Esophagus muscularis mucosa (tissue), 4 donors: ENCODE measurements at regions of chr15 and their contacts with region 1.

Region 1: GRCh38 chr15:73700041-73700842 is 16.1 kb downstream of the CD276 start:
- DNase-seq: no peak
- H3K4me3 ChIP-seq: no peak overlapping the region
- H3K27ac ChIP-seq: no peak overlapping the region
- H3K4me1 ChIP-seq: peaks cover 28 to 41% (median 30%) of the 10 kb centered on the region in 4 donors
- H3K27me3 ChIP-seq: no peaks in the 10 kb centered on the region
- CTCF ChIP-seq: peak; percentile 93 to 95 (median 94)
- EP300 ChIP-seq: no peak
- POLR2A ChIP-seq: no peak

Region 2: DNA sequence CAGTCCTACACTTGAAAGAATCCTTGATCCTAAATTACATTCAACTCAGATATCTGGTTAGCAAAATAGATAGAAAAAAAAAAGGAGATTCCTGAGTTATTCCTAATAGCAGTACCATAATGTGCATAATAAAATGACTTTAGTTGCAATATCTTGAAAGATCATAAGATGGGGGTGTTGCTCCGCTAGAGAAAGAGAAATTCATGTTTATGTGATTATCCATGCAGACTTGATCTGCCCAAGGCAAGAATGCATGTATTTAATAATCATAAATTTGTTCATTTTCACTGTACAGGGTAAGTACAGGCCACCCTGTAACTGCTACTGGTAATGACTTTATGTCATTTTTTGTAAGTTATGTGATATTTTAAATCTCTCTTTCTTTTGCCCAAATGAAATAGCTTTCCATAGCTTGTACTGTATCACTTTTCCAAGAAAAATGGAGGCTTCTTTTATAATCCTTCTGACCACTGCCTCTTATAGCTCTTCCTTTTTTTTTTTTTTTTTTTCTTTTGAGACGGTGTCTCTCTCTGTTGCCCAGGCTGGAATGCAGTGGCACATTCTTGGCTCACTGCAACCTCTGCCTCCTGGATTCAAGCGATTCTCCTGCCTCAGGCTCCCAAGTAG is 416.0 kb before region 1 on chr15:
- intact Hi-C with region 1: loop called (anchors 10 kb)
- DNase-seq: no peak
- H3K4me3 ChIP-seq: no peak overlapping the region
- H3K27ac ChIP-seq: peak overlapping the region in 1 of 4 donors; percentile 58
- H3K4me1 ChIP-seq: peaks cover 0 to 48% (median 34%) of the 10 kb centered on the region in 4 donors
- H3K27me3 ChIP-seq: no peaks in the 10 kb centered on the region
- CTCF ChIP-seq: peak; percentile 23 to 43 (median 26)
- EP300 ChIP-seq: no peak
- POLR2A ChIP-seq: no peak

Region 3: GRCh38 chr15:73560501-73561117 is 139.6 kb before region 1 on chr15:
- intact Hi-C with region 1: loop called (anchors 5 kb)
- DNase-seq: no peak
- H3K4me3 ChIP-seq: no peak overlapping the region
- H3K27ac ChIP-seq: peak overlapping the region in 1 of 4 donors; percentile 22
- H3K4me1 ChIP-seq: peaks cover 5 to 28% (median 24%) of the 10 kb centered on the region in 4 donors
- H3K27me3 ChIP-seq: no peaks in the 10 kb centered on the region
- CTCF ChIP-seq: peak; percentile 45 to 54 (median 53)
- EP300 ChIP-seq: no peak
- POLR2A ChIP-seq: no peak

Region 4: GRCh38 chr15:73637527-73637926 is 62.7 kb before region 1 on chr15:
- intact Hi-C with region 1: loop called (anchors 2 kb)
- DNase-seq: no peak
- H3K4me3 ChIP-seq: no peak overlapping the region
- H3K27ac ChIP-seq: no peak overlapping the region
- H3K4me1 ChIP-seq: peaks cover 8 to 21% (median 13%) of the 10 kb centered on the region in 4 donors
- H3K27me3 ChIP-seq: no peaks in the 10 kb centered on the region
- CTCF ChIP-seq: no peak
- EP300 ChIP-seq: no peak
- POLR2A ChIP-seq: no peak

Region 5: DNA sequence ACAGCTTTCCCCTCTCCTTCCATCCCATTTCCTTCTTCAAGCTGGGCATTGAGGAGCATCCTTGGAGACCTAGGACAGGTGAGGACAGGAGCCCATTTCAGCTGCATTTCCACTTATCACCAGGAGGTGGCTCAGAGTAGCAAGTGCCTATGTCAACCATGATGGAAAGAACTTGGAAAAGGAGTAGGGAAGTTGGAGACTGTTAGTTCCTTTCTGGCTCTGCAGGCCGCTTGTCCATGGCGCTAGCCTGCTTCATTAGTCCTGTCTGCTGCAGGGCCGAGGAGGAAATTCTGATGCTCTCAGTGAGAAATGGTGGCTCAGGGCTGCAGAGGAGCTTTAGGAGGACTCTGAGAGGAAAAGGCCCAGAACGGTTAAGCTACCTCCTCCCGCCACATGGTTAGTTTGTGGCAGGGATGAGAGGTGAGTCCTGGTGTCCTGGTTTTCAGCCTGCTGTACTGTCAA is 23.1 kb before region 1 on chr15:
- intact Hi-C with region 1: loop called (anchors 1 kb)
- DNase-seq: peak; percentile 91
- H3K4me3 ChIP-seq: no peak overlapping the region
- H3K27ac ChIP-seq: no peak overlapping the region
- H3K4me1 ChIP-seq: peaks cover 0 to 7% (median 3%) of the 10 kb centered on the region in 4 donors
- H3K27me3 ChIP-seq: peaks cover 0 to 14% (median 0%) of the 10 kb centered on the region in 4 donors
- CTCF ChIP-seq: peak; percentile 91 to 95 (median 93)
- EP300 ChIP-seq: no peak
- POLR2A ChIP-seq: no peak

Region 6: GRCh38 chr15:73767821-73768501 is 67.7 kb after region 1 on chr15:
- intact Hi-C with region 1: no loop called
- DNase-seq: no peak
- H3K4me3 ChIP-seq: no peak overlapping the region
- H3K27ac ChIP-seq: no peak overlapping the region
- H3K4me1 ChIP-seq: peaks cover 6 to 20% (median 16%) of the 10 kb centered on the region in 4 donors
- H3K27me3 ChIP-seq: no peaks in the 10 kb centered on the region
- CTCF ChIP-seq: no peak
- EP300 ChIP-seq: no peak
- POLR2A ChIP-seq: no peak